ENCODE measurements at regions of chr14 and their contacts with region 1.

Region 1: DNA sequence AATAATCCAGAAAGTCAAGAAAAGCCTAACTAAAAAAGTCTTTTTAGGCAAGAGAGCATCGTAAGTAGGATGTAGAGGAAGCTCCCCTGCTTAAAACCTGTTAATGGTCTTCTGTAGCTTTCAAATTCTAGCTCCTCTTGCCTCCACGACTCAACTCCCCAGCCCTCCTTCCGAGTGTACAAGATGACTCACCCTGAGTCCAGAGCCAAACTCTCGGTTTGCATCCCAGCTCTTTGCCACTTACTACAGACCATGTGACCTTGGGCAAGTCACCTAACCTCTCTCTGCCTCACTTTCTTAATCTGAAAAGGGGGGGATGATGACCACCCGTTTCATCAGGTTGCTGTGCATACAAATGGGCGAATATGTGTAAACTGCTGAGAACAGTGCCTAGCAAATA is 460.4 kb downstream of the DPF3 start:
- DNase-seq: no peak
- ATAC-seq: no peak
- H3K4me3 ChIP-seq: no peak overlapping the region
- H3K4me3 Mint-ChIP-seq: no peak overlapping the region
- H3K27ac ChIP-seq: no peak overlapping the region
- H3K27ac Mint-ChIP-seq: no peak overlapping the region
- H3K4me1 ChIP-seq: no peaks in the 10 kb centered on the region
- H3K4me1 Mint-ChIP-seq: peaks cover 3 to 15% (median 4%) of the 10 kb centered on the region in 3 donors
- H3K27me3 ChIP-seq: no peaks in the 10 kb centered on the region
- H3K27me3 Mint-ChIP-seq: no peaks in the 10 kb centered on the region

Region 2: DNA sequence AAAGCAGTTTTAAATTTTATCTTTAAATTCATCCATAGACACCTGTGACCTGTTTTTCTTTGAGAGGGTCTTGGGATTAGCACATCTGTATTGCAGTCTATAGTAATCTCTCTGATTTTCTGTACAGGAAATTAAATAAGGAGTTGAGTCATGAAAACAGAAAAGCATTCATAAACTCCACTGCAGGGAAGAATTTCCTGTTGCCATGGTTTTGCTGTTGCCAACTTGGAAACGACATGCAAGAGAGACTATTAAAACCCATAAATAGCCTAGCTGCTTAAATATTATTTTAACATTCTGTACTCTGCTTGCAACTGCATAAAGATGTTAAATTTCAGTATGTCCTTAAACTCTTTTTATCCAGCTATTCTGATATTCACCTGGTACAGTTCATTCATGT is 782.3 kb before region 1 on chr14:
- CTCF ChIA-PET with region 1: no interaction called
- POLR2A ChIA-PET with region 1: no interaction called
- DNase-seq: no peak
- ATAC-seq: no peak
- H3K4me3 ChIP-seq: no peak overlapping the region
- H3K4me3 Mint-ChIP-seq: no peak overlapping the region
- H3K27ac ChIP-seq: no peak overlapping the region
- H3K27ac Mint-ChIP-seq: no peak overlapping the region
- H3K4me1 ChIP-seq: no peaks in the 10 kb centered on the region
- H3K4me1 Mint-ChIP-seq: no peaks in the 10 kb centered on the region
- H3K27me3 ChIP-seq: no peaks in the 10 kb centered on the region
- H3K27me3 Mint-ChIP-seq: no peaks in the 10 kb centered on the region

Region 3: GRCh38 chr14:72389200-72389599 is 44.3 kb before region 1 on chr14:
- CTCF ChIA-PET with region 1: no interaction called
- POLR2A ChIA-PET with region 1: interaction called in 1 of 2 experiments, 11 read pairs
- DNase-seq: no peak
- ATAC-seq: no peak
- H3K4me3 ChIP-seq: no peak overlapping the region
- H3K4me3 Mint-ChIP-seq: no peak overlapping the region
- H3K27ac ChIP-seq: no peak overlapping the region
- H3K27ac Mint-ChIP-seq: no peak overlapping the region
- H3K4me1 ChIP-seq: no peaks in the 10 kb centered on the region
- H3K4me1 Mint-ChIP-seq: no peaks in the 10 kb centered on the region
- H3K27me3 ChIP-seq: peaks cover 0 to 11% of the 10 kb centered on the region in 2 experiments
- H3K27me3 Mint-ChIP-seq: peaks cover 0 to 7% of the 10 kb centered on the region in 2 donors

Region 4: GRCh38 chr14:72443991-72444441 is 10.5 kb after region 1 on chr14:
- CTCF ChIA-PET with region 1: no interaction called
- POLR2A ChIA-PET with region 1: no interaction called
- DNase-seq: peak in 21 of 35 experiments; percentile 2 to 37 (median 17)
- ATAC-seq: peak; percentile 69 to 77 (median 70)
- H3K4me3 ChIP-seq: peak overlapping the region in 1 of 2 donors; percentile 2
- H3K4me3 Mint-ChIP-seq: peak overlapping the region in 1 of 3 donors; percentile 65
- H3K27ac ChIP-seq: no peak overlapping the region
- H3K27ac Mint-ChIP-seq: peak overlapping the region in 1 of 2 donors; percentile 11
- H3K4me1 ChIP-seq: peaks cover 21 to 47% of the 10 kb centered on the region in 2 experiments
- H3K4me1 Mint-ChIP-seq: peaks cover 50 to 54% (median 53%) of the 10 kb centered on the region in 3 donors
- H3K27me3 ChIP-seq: no peaks in the 10 kb centered on the region
- H3K27me3 Mint-ChIP-seq: no peaks in the 10 kb centered on the region